AG04449 (cell line): ENCODE measurements at regions of chr7 and their contacts with region 1.

Region 1: DNA sequence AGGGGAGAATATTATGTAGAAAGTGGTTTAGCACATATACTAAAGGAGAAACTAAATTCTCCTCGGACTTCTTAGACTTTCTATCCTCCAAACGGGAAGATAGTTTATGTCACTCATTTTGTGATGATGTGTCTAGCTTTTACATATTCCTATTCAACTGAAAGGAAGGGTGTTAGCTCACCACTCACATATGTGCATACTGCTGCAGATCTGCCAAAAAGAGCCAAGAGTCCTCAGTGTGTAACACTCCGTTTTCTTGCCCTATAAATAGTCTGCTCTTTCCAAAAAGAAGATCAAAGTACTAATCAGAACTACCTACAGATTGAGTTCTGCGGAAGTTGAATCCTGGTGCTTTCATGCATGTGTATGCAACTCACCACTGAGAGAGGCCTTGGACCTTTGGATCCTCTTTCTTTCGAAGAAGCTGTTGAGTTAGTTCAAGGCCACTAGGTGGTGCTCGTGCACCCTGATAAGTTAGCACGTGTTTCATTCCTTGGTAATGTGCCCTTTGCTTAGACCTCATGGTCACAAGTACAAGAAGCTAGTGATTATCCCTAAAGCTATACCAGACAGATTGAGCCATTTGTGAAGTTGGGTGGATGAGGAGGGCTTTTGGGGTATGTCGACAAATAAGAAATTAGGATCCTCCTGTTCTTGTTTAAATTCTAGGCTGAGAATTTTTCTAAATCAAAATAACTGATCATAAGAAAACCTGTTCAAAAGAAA is 14.1 kb downstream of the YAE1 start:
- DNase-seq: peak; percentile 82
- H3K4me3 ChIP-seq: no peak overlapping the region
- CTCF ChIP-seq: peak; percentile 64

Region 2: GRCh38 chr7:39144420-39144819 is 435.9 kb before region 1 on chr7:
- CTCF ChIA-PET with region 1: no interaction called
- POLR2A ChIA-PET with region 1: no interaction called
- DNase-seq: no peak
- H3K4me3 ChIP-seq: no peak overlapping the region
- CTCF ChIP-seq: no peak

Region 3: DNA sequence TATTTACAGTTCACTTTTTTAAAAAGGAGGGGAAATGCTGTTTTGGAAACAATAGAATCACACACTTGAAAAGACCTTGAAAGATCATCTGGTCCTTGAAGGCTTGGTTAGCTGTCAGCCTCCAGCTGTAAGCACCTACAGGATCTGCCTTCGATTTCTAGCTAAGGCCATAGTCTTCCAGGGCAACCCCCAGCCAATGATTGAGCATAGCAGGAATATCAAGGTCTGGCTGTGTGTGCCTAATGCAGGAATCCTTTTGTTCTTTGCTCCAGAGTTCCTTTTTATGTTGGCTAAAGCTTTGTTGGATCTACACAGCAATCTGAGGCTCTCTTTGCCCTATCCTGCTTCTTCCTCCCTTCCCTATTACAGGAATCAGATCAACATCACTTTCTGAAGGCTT is 19.3 kb before region 1 on chr7:
- CTCF ChIA-PET with region 1: no interaction called
- POLR2A ChIA-PET with region 1: no interaction called
- DNase-seq: no peak
- H3K4me3 ChIP-seq: no peak overlapping the region
- CTCF ChIP-seq: no peak

Region 4: GRCh38 chr7:39609113-39609934 is 29.0 kb after region 1 on chr7:
- CTCF ChIA-PET with region 1: interaction called, 13 read pairs
- POLR2A ChIA-PET with region 1: no interaction called
- DNase-seq: no peak
- H3K4me3 ChIP-seq: peak overlapping the region; percentile 42
- CTCF ChIP-seq: no peak

Region 5: DNA sequence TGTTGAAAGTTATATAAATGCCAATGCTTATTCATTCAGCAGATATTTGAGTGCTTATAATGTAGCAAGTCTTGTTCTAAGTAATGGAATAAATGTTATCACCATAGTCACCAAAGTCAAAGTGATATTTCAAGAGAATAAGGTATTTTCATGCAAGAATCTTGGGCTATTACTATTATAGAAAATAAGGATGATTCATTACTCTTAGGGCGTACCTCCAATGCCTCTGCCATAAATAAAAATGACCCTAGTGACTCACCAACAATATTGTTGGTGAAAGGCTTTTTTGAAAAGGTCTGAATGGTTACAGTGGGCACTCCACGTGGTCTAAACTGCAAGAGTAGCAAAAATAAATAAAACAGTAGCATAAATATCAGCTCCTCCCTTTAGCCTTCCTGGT is 111.5 kb after region 1 on chr7:
- CTCF ChIA-PET with region 1: interaction called, 19 read pairs
- POLR2A ChIA-PET with region 1: no interaction called
- DNase-seq: no peak
- H3K4me3 ChIP-seq: no peak overlapping the region
- CTCF ChIP-seq: no peak

Region 6: DNA sequence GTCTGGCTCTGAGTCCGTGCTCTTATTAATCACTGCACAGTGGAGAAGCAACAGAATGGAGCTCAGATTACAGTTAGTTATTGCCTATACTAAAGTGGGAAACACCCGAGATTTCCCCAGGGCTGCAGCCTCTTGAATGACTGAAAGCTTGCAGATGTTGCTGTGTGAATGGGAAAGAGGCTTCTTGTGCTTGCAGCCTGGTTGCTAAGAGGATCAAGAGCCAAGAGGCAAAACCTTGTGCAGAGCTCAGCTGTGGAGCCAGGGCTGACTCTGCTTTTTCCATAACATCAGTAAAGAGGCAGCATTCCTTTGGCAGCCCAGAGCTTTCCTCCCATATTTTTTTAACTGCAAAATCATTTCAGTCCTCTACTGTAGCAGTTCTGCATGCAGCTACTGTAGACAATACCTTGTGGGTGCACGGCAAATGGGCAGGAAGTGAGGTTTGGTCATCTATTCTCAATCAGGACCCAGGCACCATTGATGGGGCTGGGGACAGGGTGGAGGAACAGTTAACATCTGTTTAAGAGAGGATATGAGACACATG is 129.5 kb after region 1 on chr7:
- CTCF ChIA-PET with region 1: interaction called, 27 read pairs
- POLR2A ChIA-PET with region 1: no interaction called
- DNase-seq: no peak
- H3K4me3 ChIP-seq: no peak overlapping the region
- CTCF ChIP-seq: no peak

Region 7: GRCh38 chr7:39746103-39746819 is 165.9 kb after region 1 on chr7:
- CTCF ChIA-PET with region 1: interaction called, 544 read pairs
- POLR2A ChIA-PET with region 1: interaction called, 4 read pairs
- DNase-seq: no peak
- H3K4me3 ChIP-seq: no peak overlapping the region
- CTCF ChIP-seq: peak; percentile 83

Region 8: DNA sequence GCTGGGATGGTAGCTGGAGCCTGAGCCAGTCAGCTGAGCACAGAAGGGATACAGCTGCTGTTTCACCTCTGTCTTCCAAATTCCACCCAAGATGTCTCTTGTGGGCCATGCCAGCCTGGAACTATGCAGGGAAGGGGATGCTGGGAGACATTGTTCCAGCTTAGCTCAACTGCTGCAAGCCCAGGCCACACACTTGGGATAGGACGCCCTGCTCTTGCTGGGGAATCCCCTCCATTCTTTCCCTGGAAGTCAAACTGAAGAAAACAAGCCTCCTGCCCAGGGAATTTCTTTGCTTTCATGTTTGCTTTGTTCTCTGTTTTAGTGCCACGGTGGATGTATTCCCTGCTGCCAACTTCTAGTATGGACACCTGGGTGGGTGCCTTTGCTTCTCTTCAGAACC is 314.6 kb after region 1 on chr7:
- CTCF ChIA-PET with region 1: interaction called, 34 read pairs
- POLR2A ChIA-PET with region 1: no interaction called
- DNase-seq: no peak
- H3K4me3 ChIP-seq: no peak overlapping the region
- CTCF ChIP-seq: no peak